ENCODE measurements at regions of chr12 and their contacts with region 1.

Region 1: GRCh38 chr12:6465467-6466183 is 4.9 kb downstream of the VAMP1 start:
- DNase-seq: no peak

Region 2: DNA sequence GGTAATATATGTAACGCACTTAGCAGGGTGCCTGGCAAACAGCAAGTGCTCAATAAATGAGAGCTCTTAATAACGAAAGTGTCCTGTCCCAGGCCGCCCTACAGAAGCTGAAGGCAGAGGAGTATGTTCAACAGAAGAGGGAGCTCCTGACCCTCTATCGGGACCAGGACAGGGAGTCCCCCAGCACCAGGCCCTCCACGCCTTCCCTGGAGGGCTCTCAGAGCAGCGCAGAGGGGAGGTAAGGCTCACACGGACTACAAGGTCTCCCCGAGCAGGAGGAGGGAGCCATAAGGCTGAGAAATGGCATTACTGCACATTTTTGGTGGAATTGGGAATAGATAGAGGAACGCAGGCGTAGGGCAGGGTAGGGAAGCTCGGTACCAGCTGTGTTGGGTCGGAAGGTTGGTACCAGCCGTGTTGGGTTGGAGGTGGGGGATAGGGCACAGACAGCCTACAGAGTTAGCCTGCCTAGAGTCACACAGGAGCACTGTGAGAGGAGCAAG is 139.2 kb before region 1 on chr12:
- intact Hi-C with region 1: loop called (anchors 5 to 10 kb)
- DNase-seq: no peak

Region 3: DNA sequence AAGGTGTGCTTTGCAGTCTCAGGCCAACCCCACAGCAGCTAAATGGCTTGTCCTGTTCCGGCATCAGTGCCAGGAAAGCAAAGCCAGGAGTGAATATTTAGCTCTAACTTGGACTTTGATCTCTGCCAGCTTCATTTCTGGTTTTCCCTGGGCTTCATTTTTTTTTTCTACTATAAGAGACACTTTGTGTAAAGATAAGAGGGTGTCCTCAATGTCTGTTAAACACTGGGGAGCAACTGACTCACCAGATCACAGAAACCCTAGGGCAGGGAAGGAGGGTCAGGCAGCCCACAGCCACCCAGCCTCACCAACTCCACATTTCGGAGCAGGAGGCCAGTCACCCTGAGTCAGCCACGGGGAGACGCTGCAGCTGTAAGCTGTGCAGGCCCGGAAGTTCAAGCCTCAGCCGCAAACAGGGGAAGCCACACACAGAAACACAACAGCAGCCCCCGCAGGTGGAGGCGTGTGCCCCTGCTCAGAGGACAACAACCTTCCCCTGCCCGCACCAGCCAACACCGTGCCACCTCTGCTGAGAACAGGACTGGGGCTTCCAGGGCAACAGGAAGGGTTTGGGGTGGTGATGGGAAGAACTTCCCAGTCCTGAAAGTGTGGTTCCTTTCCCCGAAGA is 130.1 kb before region 1 on chr12:
- intact Hi-C with region 1: loop called in 1 of 2 experiments (anchors 10 kb)
- DNase-seq: peak; percentile 95

Region 4: DNA sequence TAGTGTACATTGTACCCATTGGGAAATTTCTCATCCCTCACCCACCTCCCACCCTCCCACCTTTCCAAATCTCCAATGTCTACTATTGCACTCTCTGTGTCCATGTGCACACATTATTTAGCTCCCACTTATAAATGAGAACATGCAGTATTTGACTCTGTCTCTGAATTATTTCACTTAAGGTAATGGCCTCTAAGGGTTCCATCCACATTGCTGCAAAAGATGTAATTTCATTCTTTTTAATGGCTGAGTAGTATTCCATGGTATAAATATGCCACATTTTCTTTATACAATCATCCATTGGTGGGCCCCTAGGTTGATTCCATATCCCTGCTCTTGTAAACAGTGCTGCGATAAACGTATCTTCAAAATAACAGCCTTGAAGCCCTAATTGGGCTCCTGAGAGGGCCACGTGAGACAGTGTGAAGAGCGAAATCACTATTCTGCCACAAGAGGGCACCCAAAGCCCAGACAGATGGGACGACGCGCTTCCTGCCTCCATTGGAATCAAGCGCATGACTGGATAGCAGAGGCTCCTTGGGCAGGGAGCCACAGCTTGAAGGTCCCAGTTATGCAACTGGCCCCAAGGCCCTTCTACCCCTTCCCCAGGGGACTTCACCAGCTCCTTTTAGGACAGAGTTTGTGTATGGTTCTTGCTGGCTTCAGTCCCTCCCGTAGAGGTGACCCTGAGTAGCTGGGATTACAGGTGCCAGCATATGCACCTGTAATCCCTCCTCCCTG is 42.2 kb before region 1 on chr12:
- intact Hi-C with region 1: loop called (anchors 2 to 5 kb)
- DNase-seq: peak; percentile 95

Region 5: DNA sequence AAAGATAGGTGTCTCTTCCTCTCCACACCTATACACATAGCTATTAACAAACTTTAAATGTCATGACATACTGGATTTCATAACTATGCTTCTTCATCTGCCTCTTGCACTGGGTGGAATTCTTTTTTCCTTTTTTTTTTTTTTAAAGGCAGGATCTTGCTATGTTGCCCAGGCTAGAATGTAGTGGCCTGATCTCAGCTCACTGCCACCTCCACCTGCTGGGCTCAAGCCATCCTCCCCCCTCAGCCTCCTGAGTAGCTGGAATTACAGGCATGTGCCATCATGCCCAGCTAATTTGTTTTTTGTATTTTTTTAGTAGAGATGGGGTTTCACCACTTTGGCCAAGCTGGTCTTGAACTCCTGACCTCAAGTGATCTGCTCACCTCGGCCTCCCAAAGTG is 22.6 kb after region 1 on chr12:
- intact Hi-C with region 1: no loop called
- DNase-seq: no peak

Measured in posterior vena cava (tissue), 2 donors.